ENCODE measurements at regions of chr1 and their contacts with region 1.

Region 1: GRCh38 chr1:6554031-6554906 is at the start of gene NOL9:
- DNase-seq: peak; percentile 96
- H3K4me3 Mint-ChIP-seq: peak within 1 kb of the TSS; percentile 75
- H3K27ac Mint-ChIP-seq: peak within 1 kb of the TSS; percentile 62
- H3K4me1 Mint-ChIP-seq: peaks cover 22% of the 10 kb centered on the region
- H3K27me3 Mint-ChIP-seq: no peaks in the 10 kb centered on the region
- total RNA-seq, gene NOL9: 39.1 to 40.8 TPM

Region 2: DNA sequence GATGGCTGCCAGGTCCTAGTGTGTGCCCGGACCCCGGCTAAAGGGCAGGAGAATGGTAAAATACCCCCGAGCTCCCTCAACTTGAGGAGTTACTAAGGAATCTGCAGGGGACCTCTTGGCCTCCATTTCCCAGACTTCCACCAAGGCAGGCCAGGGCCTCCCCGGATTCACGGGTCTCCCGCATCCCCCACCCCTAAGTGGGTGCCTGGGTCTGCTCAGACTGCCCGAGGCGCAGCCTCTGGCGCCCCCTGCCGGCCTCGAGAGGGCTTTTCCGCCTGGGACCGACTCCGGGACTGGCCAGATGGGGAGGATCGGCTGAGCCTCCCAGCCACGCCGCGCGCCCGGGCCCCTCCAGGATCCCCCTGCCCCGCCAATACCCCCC is 64.5 kb before region 1 on chr1:
- CTCF ChIA-PET with region 1: interaction called, 30 read pairs
- POLR2A ChIA-PET with region 1: interaction called, 12 read pairs
- DNase-seq: peak; percentile 82
- H3K4me3 Mint-ChIP-seq: peak overlapping the region; percentile 71
- H3K27ac Mint-ChIP-seq: peak overlapping the region; percentile 35
- H3K4me1 Mint-ChIP-seq: peaks cover 20% of the 10 kb centered on the region
- H3K27me3 Mint-ChIP-seq: peaks cover 13% of the 10 kb centered on the region

Region 3: DNA sequence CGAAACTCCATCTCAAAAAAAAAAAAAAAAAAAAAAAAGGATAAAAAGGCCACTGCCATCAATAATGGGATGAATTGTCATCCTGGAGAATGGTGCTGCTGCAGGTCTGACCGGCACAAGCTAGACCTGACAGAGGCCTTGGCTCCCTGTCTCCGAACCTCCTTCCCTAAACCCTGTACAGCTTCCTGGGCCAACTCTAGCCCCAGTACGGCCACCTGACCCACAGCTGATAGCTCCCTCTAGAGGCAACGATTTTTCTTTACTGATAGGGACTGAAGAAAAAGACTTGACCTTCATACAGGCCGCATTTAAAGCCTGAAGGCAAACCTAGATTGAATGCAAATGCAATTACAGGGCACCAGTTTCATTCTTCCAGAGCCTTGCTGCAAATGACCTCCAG is 30.7 kb before region 1 on chr1:
- CTCF ChIA-PET with region 1: interaction called, 19 read pairs
- POLR2A ChIA-PET with region 1: interaction called, 9 read pairs
- DNase-seq: no peak
- H3K4me3 Mint-ChIP-seq: no peak overlapping the region
- H3K27ac Mint-ChIP-seq: no peak overlapping the region
- H3K4me1 Mint-ChIP-seq: peaks cover 2% of the 10 kb centered on the region
- H3K27me3 Mint-ChIP-seq: no peaks in the 10 kb centered on the region

Region 4: DNA sequence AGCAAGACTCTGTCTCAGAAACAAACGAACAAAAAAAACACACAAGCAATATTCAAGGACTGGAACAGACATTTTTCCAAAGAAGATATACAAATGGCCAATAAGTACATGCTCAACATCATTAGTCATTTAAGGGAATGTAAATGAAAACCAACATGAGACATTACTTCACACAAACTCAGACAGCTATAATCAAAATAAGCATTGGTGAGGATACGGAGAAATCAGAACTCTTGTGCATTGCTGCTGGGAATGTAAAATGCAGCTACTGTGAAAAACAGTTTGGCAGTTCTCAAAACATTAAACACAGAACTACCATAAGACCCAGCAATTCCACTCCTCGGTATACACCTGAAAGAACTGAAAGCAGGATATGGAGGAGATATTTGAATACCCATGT is 15.3 kb before region 1 on chr1:
- CTCF ChIA-PET with region 1: interaction called, 22 read pairs
- POLR2A ChIA-PET with region 1: interaction called, 3 read pairs
- DNase-seq: no peak
- H3K4me3 Mint-ChIP-seq: no peak overlapping the region
- H3K27ac Mint-ChIP-seq: no peak overlapping the region
- H3K4me1 Mint-ChIP-seq: peaks cover 2% of the 10 kb centered on the region
- H3K27me3 Mint-ChIP-seq: no peaks in the 10 kb centered on the region

Region 5: GRCh38 chr1:6579374-6580118 is 25.3 kb after region 1 on chr1 and contains the start of gene ZBTB48:
- CTCF ChIA-PET with region 1: interaction called, 10 read pairs
- POLR2A ChIA-PET with region 1: interaction called, 36 read pairs
- DNase-seq: peak; percentile 98
- H3K4me3 Mint-ChIP-seq: peak within 1 kb of the TSS; percentile 83
- H3K27ac Mint-ChIP-seq: peak within 1 kb of the TSS; percentile 85
- H3K4me1 Mint-ChIP-seq: peaks cover 36% of the 10 kb centered on the region
- H3K27me3 Mint-ChIP-seq: no peaks in the 10 kb centered on the region
- total RNA-seq, gene ZBTB48: 33.2 to 42.3 TPM

Region 6: DNA sequence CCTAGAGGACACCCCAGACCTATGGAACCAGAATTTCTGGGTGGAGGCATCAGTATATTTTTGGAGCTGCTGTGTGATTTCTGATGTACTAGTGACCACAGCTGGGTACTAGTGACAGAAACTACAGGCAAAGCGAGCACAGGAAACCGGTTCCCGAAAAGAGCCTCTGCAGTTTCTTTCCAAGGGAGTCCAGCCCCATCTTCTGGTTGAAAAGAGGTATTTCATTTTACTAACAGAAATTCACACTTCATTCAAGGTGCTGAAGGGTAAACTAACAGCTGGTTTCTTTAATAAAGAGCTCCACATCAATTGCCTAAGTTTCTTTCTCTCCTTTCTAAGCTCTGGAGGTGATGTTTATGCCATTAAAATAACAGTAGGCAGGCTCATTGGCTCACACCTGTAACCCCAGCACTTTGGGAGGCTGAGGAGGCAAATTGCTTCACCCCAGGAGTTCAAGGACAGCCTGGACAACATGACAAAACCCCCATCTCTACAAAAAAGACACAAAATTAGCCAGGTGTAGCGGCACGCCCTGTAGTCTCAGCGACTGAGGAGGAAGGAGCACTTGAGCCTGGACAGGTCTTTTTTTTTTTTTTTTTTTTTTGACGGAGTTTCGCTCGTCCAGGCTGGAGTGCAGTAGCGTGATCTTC is 92.4 kb after region 1 on chr1:
- CTCF ChIA-PET with region 1: interaction called, 14 read pairs
- POLR2A ChIA-PET with region 1: no interaction called
- DNase-seq: peak; percentile 39
- H3K4me3 Mint-ChIP-seq: no peak overlapping the region
- H3K27ac Mint-ChIP-seq: no peak overlapping the region
- H3K4me1 Mint-ChIP-seq: peaks cover 2% of the 10 kb centered on the region
- H3K27me3 Mint-ChIP-seq: no peaks in the 10 kb centered on the region